GM10248 (cell line): ENCODE measurements at regions of chr1 and their contacts with region 1.

Region 1: GRCh38 chr1:46132529-46133180 is at the start of gene PIK3R3:
- DNase-seq: peak; percentile 97
- CTCF ChIP-seq: no peak

Region 2: DNA sequence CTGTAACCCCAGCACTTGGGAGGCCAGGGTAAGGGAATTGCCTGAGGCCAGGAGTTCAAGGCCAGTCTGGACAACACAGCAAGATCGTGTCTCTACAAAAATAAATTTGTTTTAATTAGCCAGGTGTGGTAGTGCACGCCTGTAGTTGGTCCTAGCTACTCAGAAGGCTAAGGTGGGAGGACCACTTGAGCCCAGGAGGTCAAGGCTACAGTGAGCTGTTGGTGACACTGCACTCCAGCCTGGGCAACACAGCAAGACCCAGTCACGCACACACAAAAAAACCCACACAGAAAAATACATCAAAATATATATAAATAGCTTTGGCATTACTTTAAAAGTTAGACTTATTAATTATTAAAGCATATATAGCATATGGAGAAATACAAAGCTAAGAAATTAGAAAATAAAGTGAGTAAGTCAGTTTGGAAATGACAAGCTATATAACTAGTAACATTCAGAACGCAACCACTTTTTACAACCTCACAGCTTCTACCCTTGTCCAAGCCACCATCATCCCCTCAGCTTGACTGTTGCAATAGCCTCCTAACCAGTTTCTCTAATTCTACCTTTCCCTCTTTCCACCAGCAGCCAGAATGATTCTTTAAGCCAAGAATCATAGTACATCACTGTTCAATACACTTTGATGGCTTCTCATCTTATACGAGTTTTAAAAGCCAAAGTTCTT is 14.7 kb before region 1 on chr1:
- CTCF ChIA-PET with region 1: interaction called, 12 read pairs
- POLR2A ChIA-PET with region 1: interaction called, 21 read pairs
- DNase-seq: no peak
- CTCF ChIP-seq: no peak

Region 3: DNA sequence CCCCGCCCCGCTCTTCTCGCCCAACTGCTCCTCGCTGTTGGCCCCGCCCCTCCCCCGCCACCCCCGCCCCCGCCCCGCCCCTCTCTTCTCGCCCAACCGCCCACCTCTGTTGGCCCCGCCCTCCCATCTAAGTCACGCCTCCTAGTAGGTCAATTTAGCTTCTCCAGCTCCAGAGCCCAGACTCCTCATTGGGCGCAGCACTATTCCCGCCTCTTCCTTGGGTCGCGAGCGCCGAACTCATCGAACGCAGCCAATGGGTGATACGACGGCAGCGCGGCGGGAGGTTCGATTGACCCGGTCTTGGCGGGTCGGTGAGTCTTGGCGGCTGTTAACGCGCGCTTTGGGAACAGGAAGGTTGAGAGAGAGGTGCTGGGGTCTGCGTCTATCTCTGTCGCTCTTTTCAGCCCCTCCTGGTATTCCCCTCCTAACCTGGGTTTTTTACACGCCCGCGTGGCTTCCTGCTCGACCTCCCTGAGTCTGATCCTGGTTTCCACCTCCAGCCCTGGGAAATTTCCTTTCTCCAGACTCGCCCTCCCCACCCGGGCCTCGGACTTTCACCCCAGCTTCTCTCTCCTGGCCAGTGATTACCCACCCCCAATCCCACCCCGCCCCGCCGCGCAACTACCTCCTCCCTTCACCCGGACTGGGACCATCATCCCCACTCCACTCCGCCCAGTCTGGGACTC is 114.9 kb after region 1 on chr1 and contains the start of gene RAD54L:
- CTCF ChIA-PET with region 1: no interaction called
- POLR2A ChIA-PET with region 1: interaction called, 11 read pairs
- DNase-seq: peak; percentile 99
- CTCF ChIP-seq: no peak

Region 4: GRCh38 chr1:46379996-46380395 is 247.3 kb after region 1 on chr1:
- CTCF ChIA-PET with region 1: no interaction called
- POLR2A ChIA-PET with region 1: no interaction called
- DNase-seq: no peak
- CTCF ChIP-seq: no peak